ENCODE measurements at regions of chr14 and their contacts with region 1.

Region 1: GRCh38 chr14:50775357-50775756 is 55.6 kb downstream of the NIN start:
- DNase-seq: no peak
- ATAC-seq: no peak

Region 2: GRCh38 chr14:50501642-50502041 is 273.7 kb before region 1 on chr14:
- intact Hi-C with region 1: no loop called
- DNase-seq: no peak
- ATAC-seq: no peak

Region 3: GRCh38 chr14:50599700-50600444 is 175.5 kb before region 1 on chr14:
- intact Hi-C with region 1: loop called (anchors 5 kb)
- DNase-seq: no peak
- ATAC-seq: peak; percentile 62

Region 4: GRCh38 chr14:50619556-50620141 is 155.7 kb before region 1 on chr14:
- intact Hi-C with region 1: loop called (anchors 5 kb)
- DNase-seq: no peak
- ATAC-seq: no peak

Measured in Right ventricle myocardium inferior (tissue), 1 donor.